HEK293 (cell line): ENCODE measurements at regions of chr17 and their contacts with region 1.

Region 1: GRCh38 chr17:58121925-58122324 is 26.3 kb upstream of the OR4D1 start:
- H3K4me3 ChIP-seq: no peak overlapping the region
- H3K27ac ChIP-seq: no peak overlapping the region
- H3K4me1 ChIP-seq: no peaks in the 10 kb centered on the region
- CTCF ChIP-seq: peak; percentile 68

Region 2: GRCh38 chr17:57783106-57783742 is 338.7 kb before region 1 on chr17:
- CTCF ChIA-PET with region 1: no interaction called
- POLR2A ChIA-PET with region 1: no interaction called
- H3K4me3 ChIP-seq: no peak overlapping the region
- H3K27ac ChIP-seq: no peak overlapping the region; the same call in 1 of the 2 replicates
- H3K4me1 ChIP-seq: peaks cover 3% of the 10 kb centered on the region; the same call in 1 of the 2 replicates
- CTCF ChIP-seq: peak; percentile 94

Region 3: DNA sequence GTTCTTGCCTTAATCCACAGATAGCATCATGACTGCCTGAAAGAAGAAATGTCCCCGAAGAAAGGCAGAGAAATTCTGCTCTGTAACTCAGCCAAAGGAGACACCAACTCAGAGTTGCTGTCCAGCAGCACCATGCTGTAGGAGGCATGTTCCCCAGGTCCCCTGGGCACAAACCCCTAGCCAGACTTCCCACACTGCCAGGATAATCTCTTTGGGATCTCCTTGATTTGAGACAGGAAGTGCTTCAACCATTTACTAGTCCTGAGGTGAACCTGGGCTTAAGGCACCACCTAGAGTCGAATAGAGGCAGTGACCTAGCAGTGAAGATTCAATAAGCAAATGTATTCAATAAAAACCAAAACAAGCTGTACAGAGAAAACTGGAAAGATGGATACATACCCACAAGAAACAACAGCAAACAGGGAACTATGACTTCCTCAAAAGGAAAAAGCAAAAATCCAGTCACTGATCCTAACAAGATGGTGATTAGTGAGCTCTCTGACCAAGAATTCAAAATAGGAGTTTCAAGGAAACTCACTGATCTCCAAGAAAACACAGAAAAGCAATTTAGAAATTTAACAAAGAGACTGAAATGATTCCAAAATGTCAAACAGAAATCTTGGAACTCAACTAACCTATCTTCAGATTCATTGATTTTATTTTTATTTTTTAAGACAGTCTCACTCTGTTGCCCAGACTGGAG is 50.6 kb after region 1 on chr17:
- CTCF ChIA-PET with region 1: interaction called, 11 read pairs
- POLR2A ChIA-PET with region 1: no interaction called
- H3K4me3 ChIP-seq: no peak overlapping the region
- H3K27ac ChIP-seq: no peak overlapping the region
- H3K4me1 ChIP-seq: no peaks in the 10 kb centered on the region
- CTCF ChIP-seq: no peak

Region 4: GRCh38 chr17:58294034-58294433 is 172.1 kb after region 1 on chr17:
- CTCF ChIA-PET with region 1: no interaction called
- POLR2A ChIA-PET with region 1: no interaction called
- H3K4me3 ChIP-seq: no peak overlapping the region
- H3K27ac ChIP-seq: no peak overlapping the region
- H3K4me1 ChIP-seq: peaks cover 7% of the 10 kb centered on the region; the same call in 1 of the 2 replicates
- CTCF ChIP-seq: no peak